Activated CD8-positive, alpha-beta memory T cell treated with anti-CD3 and anti-CD28 coated beads, Interleukin-2, amount 10 ng/mL, durations not matched to agents 7 days and 5 days (primary cell): ENCODE measurements at regions of chr10 and their contacts with region 1.

Region 1: DNA sequence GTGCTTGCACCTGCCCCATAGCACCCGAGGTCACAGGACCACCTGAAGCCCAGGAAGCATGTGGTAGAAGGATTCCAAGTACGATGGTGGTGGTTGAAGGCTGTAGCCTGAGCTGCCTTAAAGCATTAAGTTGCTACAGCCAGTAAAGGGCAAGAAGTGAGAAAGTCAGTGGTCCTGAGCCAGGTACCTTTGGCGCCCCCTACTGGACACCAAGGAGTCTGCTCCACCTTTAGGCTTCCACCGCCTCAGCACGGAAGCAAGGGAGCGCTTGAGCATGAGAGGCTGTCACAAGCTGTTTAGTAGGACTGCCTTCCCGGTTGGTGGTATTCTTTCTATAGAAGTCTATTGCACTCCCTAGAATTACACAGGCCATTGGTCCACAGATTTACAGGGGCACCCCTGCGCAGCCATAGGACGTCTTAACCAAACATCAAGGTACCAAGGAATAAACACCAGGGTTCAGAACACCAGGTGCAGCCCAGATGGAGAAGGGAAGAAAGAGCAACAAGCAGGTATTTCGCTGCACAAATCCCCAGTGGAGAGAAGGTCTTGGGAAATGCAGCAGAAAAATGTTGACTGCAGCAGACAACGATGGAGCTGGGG is 2.2 kb downstream of the CRTAC1 start:
- DNase-seq: peak; percentile 76
- ATAC-seq: peak; percentile 85
- H3K4me3 Mint-ChIP-seq: no peak overlapping the region
- H3K27ac Mint-ChIP-seq: no peak overlapping the region
- H3K4me1 Mint-ChIP-seq: no peaks in the 10 kb centered on the region
- H3K27me3 Mint-ChIP-seq: peaks cover 59% of the 10 kb centered on the region

Region 2: DNA sequence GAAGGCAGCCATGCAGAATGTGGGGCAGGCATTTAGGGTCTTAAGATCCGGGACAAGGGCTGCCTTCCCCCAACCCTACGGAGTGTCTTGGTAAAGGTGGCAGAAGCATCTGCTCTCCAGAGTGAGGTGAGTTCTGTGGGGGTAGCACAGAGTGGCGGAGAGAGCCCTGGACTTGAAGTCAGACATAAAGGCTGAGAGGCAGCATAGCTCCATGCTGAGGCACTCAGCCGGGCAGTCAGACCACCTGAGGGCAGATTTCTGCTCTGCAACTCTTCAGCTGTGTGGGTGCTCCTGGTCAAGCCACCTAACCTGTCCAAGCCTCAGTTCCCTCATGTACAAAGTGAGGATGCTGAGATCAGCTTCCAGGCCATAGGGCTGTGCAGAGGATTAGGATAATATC is 78.8 kb before region 1 on chr10:
- CTCF ChIA-PET with region 1: no interaction called
- DNase-seq: no peak
- ATAC-seq: no peak
- H3K4me3 Mint-ChIP-seq: no peak overlapping the region
- H3K27ac Mint-ChIP-seq: no peak overlapping the region
- H3K4me1 Mint-ChIP-seq: no peaks in the 10 kb centered on the region
- H3K27me3 Mint-ChIP-seq: peaks cover 10% of the 10 kb centered on the region

Region 3: GRCh38 chr10:98038288-98038687 is 10.0 kb after region 1 on chr10:
- CTCF ChIA-PET with region 1: interaction called, 18 read pairs
- DNase-seq: no peak
- ATAC-seq: no peak
- H3K4me3 Mint-ChIP-seq: no peak overlapping the region
- H3K27ac Mint-ChIP-seq: no peak overlapping the region
- H3K4me1 Mint-ChIP-seq: peaks cover 1% of the 10 kb centered on the region
- H3K27me3 Mint-ChIP-seq: peaks cover 82% of the 10 kb centered on the region

Region 4: DNA sequence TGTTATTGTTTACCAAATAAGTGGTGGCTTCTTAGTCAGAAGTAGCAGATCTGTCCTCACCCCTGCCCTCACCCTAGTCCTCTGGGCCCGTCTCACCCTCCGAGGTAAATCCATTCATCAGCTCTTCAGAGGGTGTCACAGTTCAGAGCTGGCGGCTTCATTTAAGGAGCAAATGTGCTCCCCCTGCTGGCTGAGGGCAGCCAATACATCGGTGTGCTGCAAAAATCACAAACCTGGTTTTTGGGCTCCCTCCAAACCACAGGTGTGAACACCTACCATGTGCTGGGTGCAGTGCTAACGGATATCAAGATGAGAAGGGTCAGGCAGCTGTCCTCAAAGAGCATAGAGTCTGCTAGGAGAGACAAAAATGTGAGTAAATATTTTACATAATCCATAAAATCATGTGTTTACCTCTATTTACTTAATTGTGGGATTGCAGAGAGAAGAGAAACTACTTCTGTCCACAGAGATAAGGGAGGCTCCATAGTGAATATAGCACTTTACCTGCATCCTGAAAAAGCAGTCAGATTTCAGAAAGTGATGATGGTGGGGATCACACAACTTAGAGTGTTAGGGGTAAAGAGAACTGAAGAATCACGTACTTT is 17.6 kb after region 1 on chr10:
- CTCF ChIA-PET with region 1: interaction called, 23 read pairs
- DNase-seq: peak; percentile 71
- ATAC-seq: peak; percentile 78
- H3K4me3 Mint-ChIP-seq: no peak overlapping the region
- H3K27ac Mint-ChIP-seq: no peak overlapping the region
- H3K4me1 Mint-ChIP-seq: peaks cover 2% of the 10 kb centered on the region
- H3K27me3 Mint-ChIP-seq: peaks cover 39% of the 10 kb centered on the region